H1 (cell line): ENCODE measurements at regions of chr6 and their contacts with region 1.

Region 1: DNA sequence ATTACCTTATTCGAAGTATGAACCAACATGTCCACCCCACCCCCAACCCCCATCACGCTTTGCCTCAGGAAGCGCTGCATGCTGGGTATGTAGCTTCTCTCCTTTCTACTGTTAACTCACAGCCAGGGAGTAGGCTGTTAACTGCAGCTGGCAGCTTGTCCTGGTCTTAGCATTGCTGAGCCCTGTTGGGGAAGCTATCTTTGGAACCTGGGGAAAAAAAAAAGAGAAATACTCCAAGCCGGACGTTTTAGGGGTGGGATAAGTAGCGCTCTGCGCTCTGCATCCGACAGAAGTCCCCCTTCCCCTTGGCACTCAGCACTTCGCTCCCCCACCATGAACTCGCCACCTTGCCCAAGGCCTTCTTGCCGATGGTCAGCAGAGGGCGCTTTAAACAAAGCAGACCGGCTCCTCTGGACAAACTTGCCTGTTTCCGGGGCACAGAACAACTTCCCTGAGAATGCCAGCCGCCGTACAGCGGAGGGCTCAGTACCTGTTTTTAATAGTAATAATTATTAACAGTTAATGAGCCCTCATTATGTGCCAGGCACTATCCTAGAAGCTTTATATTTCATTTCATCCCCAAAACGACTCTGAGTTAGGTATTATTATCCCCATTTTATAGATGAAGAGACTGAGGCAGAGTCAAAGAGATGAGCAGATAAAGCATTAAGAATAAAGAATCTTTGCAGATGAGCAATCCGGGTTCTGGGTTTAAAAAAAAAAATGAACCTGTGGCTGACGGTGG is 35.2 kb upstream of the MDFI start:
- DNase-seq: peak; percentile 61 to 84
- H3K4me3 ChIP-seq: peak overlapping the region in 3 of 4 experiments; percentile 32 to 54 (median 33); a peak in 5 of 8 replicates
- H3K27ac ChIP-seq: no peak overlapping the region
- H3K4me1 ChIP-seq: peaks cover 0 to 30% (median 11%) of the 10 kb centered on the region in 4 experiments; a peak in 6 of 7 replicates
- H3K27me3 ChIP-seq: no peaks in the 10 kb centered on the region
- CTCF ChIP-seq: peak in 2 of 3 experiments; percentile 94 to 95; a peak in 3 of 4 replicates
- EP300 ChIP-seq: no peak; a peak in 1 of 3 replicates
- POLR2A ChIP-seq: 0 out of 3 replicates have a peak, but pooled peaks of 1 of the 2 experiments have one; percentile 25
- RAD21 ChIP-seq: peak; percentile 95 to 96

Region 2: GRCh38 chr6:41424370-41425058 is 178.5 kb before region 1 on chr6:
- CTCF ChIA-PET with region 1: interaction called, 361 read pairs
- POLR2A ChIA-PET with region 1: interaction called, 6 read pairs
- DNase-seq: peak in 1 of 2 experiments; percentile 97
- H3K4me3 ChIP-seq: no peak overlapping the region
- H3K27ac ChIP-seq: no peak overlapping the region
- H3K4me1 ChIP-seq: peaks cover 3 to 29% (median 8%) of the 10 kb centered on the region in 4 experiments
- H3K27me3 ChIP-seq: peaks cover 24 to 62% (median 54%) of the 10 kb centered on the region in 4 experiments
- CTCF ChIP-seq: peak; percentile 34 to 88 (median 85)
- EP300 ChIP-seq: no peak
- POLR2A ChIP-seq: no peak
- RAD21 ChIP-seq: peak; percentile 72 to 82

Region 3: DNA sequence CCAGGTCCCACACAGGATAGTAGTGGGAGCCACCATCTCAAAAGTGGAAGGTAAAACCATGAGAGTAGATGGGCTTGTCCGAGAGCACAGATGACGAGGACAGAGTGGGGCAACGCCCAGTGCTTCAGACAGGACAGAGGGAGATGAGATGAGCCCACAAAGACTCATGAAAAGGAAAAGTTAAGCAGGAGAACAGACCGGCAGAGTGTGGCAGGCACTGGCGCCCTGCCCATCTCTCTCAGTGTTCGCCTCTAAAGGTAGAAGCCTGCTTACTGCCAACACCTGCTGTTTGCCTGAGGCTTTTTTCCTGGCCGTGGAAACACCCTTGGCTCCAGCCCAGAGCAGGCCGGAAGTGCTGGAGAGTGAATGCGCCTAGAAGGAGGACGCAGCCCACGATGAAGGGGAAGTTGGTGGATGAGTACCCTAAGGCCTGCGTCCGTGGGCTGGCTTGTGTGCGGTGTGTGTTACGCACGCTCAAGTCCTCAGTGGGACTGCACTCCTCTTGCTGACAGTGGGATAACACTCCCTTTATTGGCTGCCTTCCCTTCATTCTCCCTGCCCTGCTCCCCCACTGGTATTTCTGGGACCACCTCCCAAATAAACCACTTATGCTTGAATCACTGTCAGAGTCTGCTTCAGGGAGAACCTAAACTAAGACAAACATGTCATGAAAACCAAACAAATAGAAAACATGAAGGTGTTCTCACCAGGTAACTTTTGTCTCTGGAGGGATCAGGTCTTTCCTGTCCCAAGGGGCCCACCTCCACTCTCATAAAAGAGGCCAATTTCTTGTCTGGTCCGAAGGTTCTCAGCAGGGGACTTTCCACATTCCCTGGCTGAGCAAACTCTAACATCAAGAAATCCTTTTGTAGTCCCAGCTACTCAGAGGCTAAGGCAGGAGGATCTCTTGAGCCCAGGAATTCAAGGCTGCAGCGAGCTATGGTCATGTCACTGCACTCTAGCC is 66.0 kb before region 1 on chr6:
- CTCF ChIA-PET with region 1: interaction called, 10 read pairs
- POLR2A ChIA-PET with region 1: no interaction called
- DNase-seq: no peak
- H3K4me3 ChIP-seq: no peak overlapping the region
- H3K27ac ChIP-seq: no peak overlapping the region
- H3K4me1 ChIP-seq: peaks cover 0 to under 1% (median 0%) of the 10 kb centered on the region in 4 experiments; a peak in 2 of 7 replicates
- H3K27me3 ChIP-seq: peaks cover 0 to 10% (median under 1%) of the 10 kb centered on the region in 4 experiments; a peak in 4 of 7 replicates
- CTCF ChIP-seq: no peak
- EP300 ChIP-seq: no peak
- POLR2A ChIP-seq: no peak
- RAD21 ChIP-seq: no peak

Region 4: DNA sequence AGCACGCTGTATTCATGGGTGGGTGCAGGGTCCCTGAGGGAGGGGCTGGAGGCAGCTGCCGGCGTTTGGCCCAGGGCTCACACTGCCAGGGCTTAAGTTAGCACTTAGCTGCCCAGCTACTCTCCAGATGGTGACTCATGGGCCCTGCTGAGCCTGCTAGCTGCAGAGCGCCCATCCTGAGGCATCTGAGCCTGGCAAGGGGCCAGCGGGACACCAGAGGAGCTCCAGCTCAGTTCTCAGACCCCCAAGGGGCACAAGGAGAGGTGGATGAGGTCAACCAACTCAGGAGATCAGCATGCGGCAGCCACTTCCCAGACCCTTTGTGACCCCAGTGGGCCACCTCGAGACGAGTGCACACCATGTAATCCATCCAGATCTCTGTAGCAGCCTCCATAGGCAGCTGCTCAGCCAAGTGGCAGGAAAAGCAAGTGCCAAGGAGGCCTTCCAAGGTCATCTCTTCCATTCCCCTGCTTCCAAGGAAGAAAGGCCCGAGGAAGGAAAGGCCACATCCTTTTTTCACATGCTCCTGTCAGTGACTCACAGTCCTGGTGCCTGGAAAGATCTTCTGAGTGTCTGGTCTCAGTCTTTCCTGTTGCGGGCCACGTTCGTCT is 21.6 kb before region 1 on chr6:
- CTCF ChIA-PET with region 1: interaction called, 12 read pairs
- POLR2A ChIA-PET with region 1: interaction called, 4 read pairs
- DNase-seq: no peak
- H3K4me3 ChIP-seq: no peak overlapping the region
- H3K27ac ChIP-seq: no peak overlapping the region
- H3K4me1 ChIP-seq: peaks cover 16 to 48% (median 36%) of the 10 kb centered on the region in 4 experiments
- H3K27me3 ChIP-seq: no peaks in the 10 kb centered on the region
- CTCF ChIP-seq: no peak
- EP300 ChIP-seq: no peak
- POLR2A ChIP-seq: no peak
- RAD21 ChIP-seq: no peak

Region 5: GRCh38 chr6:41638002-41638934 is 35.2 kb after region 1 on chr6 and contains the start of gene MDFI:
- CTCF ChIA-PET with region 1: interaction called, 48 read pairs
- POLR2A ChIA-PET with region 1: interaction called, 4 read pairs
- DNase-seq: peak; percentile 46 to 81
- H3K4me3 ChIP-seq: peak within 1 kb of the TSS; percentile 67 to 89 (median 78)
- H3K27ac ChIP-seq: no peak within 1 kb of the TSS
- H3K4me1 ChIP-seq: peaks cover 8 to 28% (median 17%) of the 10 kb centered on the region in 4 experiments
- H3K27me3 ChIP-seq: peaks cover 8 to 69% (median 37%) of the 10 kb centered on the region in 4 experiments; a peak in 6 of 7 replicates
- CTCF ChIP-seq: no peak
- EP300 ChIP-seq: no peak
- POLR2A ChIP-seq: no peak
- RAD21 ChIP-seq: no peak; a peak in 1 of 4 replicates
- total RNA-seq, gene MDFI: 38.5 and 41.0 TPM in 2 replicates

Region 6: GRCh38 chr6:41663563-41663962 is 60.5 kb after region 1 on chr6:
- CTCF ChIA-PET with region 1: interaction called, 37 read pairs
- POLR2A ChIA-PET with region 1: no interaction called
- DNase-seq: no peak
- H3K4me3 ChIP-seq: no peak overlapping the region
- H3K27ac ChIP-seq: no peak overlapping the region
- H3K4me1 ChIP-seq: peaks cover 0 to 3% (median under 1%) of the 10 kb centered on the region in 4 experiments; a peak in 3 of 7 replicates
- H3K27me3 ChIP-seq: no peaks in the 10 kb centered on the region
- CTCF ChIP-seq: no peak
- EP300 ChIP-seq: no peak
- POLR2A ChIP-seq: no peak
- RAD21 ChIP-seq: no peak; a peak in 1 of 4 replicates

Region 7: GRCh38 chr6:41895300-41896233 is 292.5 kb after region 1 on chr6 and contains the start of gene USP49:
- CTCF ChIA-PET with region 1: no interaction called
- POLR2A ChIA-PET with region 1: no interaction called
- DNase-seq: peak; percentile 59 to 97
- H3K4me3 ChIP-seq: peak within 1 kb of the TSS; percentile 80 to 95 (median 86)
- H3K27ac ChIP-seq: peak within 1 kb of the TSS; percentile 83
- H3K4me1 ChIP-seq: peaks cover 0 to 11% (median 4%) of the 10 kb centered on the region in 4 experiments; a peak in 4 of 7 replicates
- H3K27me3 ChIP-seq: no peaks in the 10 kb centered on the region
- CTCF ChIP-seq: no peak
- EP300 ChIP-seq: 0 out of 3 replicates have a peak, but pooled peaks of 1 of the 2 experiments have one; percentile 4
- POLR2A ChIP-seq: peak; percentile 20 to 71
- RAD21 ChIP-seq: no peak
- total RNA-seq, gene USP49: 21.1 and 24.4 TPM in 2 replicates